ENCODE measurements at regions of chr5 and their contacts with region 1.

Region 1: GRCh38 chr5:77844623-77845323 is 68.6 kb upstream of the TBCA start:
- DNase-seq: peak in 1 of 7 donors; percentile 11
- H3K4me3 ChIP-seq: peak overlapping the region in 3 of 4 donors; percentile 35 to 55 (median 42)
- H3K27ac ChIP-seq: no peak overlapping the region
- H3K4me1 ChIP-seq: peaks cover 0 to 5% of the 10 kb centered on the region in 2 donors
- H3K27me3 ChIP-seq: no peaks in the 10 kb centered on the region
- CTCF ChIP-seq: peak in 1 of 6 experiments; percentile 29
- POLR2A ChIP-seq: no peak

Region 2: DNA sequence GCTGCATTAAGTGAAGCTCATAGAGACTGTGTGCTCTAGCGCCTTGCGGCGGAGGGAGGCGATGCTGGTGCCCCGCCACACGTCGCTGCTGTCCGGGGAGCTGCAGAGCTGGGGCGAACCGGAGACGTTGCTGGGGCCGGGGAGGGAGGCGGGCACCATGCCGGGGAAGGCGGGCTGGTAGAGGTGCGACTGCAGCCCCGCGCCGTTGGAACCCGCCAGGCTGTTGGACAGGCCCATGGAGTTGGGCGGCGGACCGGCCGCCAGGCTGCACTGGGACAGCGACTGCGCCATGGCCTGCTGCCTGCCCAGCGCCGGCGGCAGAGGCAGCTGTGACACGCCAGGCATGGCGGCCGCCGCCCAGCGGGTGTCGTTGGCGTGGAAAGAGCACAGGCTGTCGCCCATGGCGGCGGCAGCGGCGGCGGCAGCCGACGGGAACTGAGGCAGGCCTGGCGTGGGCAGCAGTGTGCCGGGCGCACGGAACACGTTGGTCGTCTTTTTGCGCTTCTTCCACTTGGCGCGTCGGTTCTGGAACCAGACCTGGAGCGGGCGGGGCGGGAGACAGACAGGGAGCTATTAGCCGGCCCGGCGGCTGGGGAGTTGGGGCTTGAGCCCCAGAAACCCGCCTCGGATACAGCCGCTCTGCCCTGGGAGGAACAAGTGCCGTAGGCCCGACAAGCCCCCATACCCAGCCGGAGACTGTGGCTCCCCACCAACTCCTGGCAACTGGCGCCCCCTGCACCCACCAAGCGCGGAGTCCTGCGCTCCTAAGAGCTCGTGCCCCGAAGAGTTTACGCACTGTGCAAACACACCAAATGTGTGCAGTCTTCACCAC is 214.3 kb before region 1 on chr5:
- intact Hi-C with region 1: loop called in 1 of 2 experiments (anchors 10 kb)
- DNase-seq: peak in 4 of 7 donors; percentile 29 to 51 (median 34)
- H3K4me3 ChIP-seq: peak overlapping the region in 2 of 4 donors; percentile 32 to 56
- H3K27ac ChIP-seq: no peak overlapping the region
- H3K4me1 ChIP-seq: peaks cover 9 to 12% of the 10 kb centered on the region in 2 donors
- H3K27me3 ChIP-seq: peaks cover 100% of the 10 kb centered on the region
- CTCF ChIP-seq: peak in 3 of 6 experiments; percentile 13 to 24 (median 22)
- POLR2A ChIP-seq: no peak

Region 3: DNA sequence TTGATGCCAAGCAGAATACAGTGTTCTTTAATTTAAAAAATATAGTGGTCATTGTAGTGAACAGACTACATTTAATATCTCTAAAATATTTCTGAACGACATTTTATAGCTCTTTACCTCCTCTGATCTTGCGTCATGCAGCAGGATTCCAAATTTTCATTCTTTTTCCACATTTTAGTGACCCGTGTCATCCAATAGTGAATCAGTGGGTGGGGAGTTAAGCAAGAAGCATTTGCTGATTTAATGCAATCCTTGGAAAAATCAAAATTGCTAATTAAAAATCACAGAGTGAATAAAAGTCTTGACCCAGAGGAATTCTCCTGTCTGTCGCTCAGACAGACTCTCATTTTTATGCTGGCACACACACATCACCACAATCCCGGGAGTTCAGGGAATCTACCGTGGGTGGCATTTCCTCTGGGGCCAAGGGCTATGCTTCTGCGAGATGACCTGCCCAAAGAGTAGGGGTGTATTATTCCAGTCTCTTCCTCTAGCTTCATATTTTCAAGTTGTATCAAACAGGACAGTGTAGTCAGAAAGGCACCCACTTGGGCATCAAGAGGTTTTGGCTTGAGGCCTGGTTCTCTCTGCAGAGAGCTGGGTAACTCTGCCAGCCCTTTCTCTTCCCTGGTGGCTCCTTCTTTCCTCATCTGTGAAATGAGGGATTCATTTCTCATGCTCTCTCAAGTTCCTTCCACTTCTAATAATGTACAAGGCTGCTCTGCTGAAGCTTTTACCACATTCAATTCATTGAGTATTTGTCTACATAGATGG is 181.5 kb before region 1 on chr5:
- intact Hi-C with region 1: no loop called
- DNase-seq: no peak
- H3K4me3 ChIP-seq: no peak overlapping the region
- H3K27ac ChIP-seq: no peak overlapping the region
- H3K4me1 ChIP-seq: no peaks in the 10 kb centered on the region
- H3K27me3 ChIP-seq: peaks cover 2% of the 10 kb centered on the region
- CTCF ChIP-seq: no peak
- POLR2A ChIP-seq: no peak

Measured in adrenal gland (tissue), 19 donors.